ENCODE measurements at regions of chr14 and their contacts with region 1.

Region 1: DNA sequence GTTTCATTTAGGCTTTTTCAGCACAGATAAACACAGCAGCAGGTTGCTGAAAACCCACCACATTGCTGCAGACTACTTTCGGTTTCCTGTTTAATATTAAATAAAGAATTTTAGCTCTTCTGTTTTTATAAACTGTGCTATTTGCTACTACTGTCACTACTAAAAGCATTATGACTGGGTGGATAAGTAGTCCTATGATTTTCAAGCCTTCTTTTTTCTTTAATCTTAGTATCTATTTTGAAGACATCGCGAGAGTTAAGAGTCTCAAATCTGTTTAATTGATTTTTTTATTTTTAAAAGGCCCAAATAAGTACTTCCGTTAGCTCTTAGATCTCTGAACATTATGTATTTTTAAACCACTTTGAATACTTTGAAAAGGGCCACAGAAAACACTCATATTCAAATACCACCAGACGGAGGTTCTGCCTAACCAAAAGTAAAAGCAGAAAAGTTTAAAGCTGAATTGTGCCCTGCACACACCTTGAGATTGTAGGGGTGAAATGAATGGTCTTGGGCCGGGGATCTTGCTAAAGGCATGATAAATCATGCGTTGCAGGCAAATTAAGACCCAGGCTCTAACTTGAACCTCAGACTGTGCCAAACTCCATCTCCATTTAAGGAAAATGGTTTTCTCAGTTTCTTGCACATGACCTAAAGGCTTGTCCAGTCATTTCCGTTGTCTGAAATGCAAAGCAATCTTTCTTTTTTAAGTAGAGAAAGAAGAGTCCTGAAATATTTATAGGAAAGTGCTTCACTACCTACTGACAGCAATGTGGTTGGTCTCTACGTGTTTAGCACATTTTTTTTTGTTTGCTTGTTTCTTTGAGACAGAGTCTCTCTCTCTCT is 13.6 kb upstream of the FOXN3 start:
- DNase-seq: peak; percentile 61
- ATAC-seq: peak; percentile 74
- H3K4me3 Mint-ChIP-seq: peak overlapping the region; percentile 70
- H3K27ac Mint-ChIP-seq: peak overlapping the region; percentile 95
- H3K4me1 Mint-ChIP-seq: peaks cover 75% of the 10 kb centered on the region
- H3K27me3 Mint-ChIP-seq: no peaks in the 10 kb centered on the region

Region 2: DNA sequence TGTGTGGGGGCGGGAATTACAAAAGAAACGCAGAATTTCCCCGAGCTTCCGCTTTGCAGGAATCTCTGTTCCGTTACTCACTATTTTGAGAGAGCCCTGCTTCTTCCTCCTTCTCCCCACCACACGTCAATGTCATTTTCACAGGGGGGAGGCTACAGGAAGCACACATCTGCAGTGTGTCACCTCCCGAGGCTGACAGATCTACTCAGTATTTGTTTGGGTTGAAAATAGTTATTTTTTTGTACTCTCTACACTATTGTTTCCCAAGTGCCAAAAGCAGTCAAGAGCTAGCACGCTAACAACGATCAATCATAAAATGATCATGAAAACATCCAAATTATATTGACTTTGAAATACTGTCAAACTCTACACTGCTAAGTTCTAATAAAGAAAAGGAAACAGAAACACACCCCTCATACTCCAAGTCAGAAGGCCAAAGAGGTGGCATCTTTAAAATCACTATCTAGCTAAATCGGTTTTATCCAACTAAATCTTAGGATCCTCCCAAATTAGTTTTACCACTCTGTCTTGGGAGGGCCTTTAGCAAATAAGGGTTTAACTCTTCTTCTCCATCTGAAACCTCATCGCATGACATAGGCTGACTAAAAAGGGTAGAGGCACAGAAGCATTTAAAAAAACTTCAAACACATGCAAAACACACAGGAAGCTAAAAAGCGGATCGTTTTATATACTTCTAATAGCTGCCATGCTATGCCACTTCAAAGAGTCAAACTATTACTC is 65.4 kb before region 1 on chr14:
- CTCF ChIA-PET with region 1: interaction called, 7 read pairs
- POLR2A ChIA-PET with region 1: interaction called, 11 read pairs
- DNase-seq: peak; percentile 75
- ATAC-seq: peak; percentile 90
- H3K4me3 Mint-ChIP-seq: peak overlapping the region; percentile 74
- H3K27ac Mint-ChIP-seq: peak overlapping the region; percentile 82
- H3K4me1 Mint-ChIP-seq: peaks cover 48% of the 10 kb centered on the region
- H3K27me3 Mint-ChIP-seq: no peaks in the 10 kb centered on the region

Region 3: GRCh38 chr14:89417469-89418225 is 13.0 kb before region 1 on chr14:
- CTCF ChIA-PET with region 1: interaction called, 3 read pairs
- POLR2A ChIA-PET with region 1: interaction called, 11 read pairs
- DNase-seq: peak; percentile 78
- ATAC-seq: peak; percentile 62
- H3K4me3 Mint-ChIP-seq: peak overlapping the region; percentile 86
- H3K27ac Mint-ChIP-seq: peak overlapping the region; percentile 95
- H3K4me1 Mint-ChIP-seq: peaks cover 55% of the 10 kb centered on the region
- H3K27me3 Mint-ChIP-seq: no peaks in the 10 kb centered on the region

Region 4: DNA sequence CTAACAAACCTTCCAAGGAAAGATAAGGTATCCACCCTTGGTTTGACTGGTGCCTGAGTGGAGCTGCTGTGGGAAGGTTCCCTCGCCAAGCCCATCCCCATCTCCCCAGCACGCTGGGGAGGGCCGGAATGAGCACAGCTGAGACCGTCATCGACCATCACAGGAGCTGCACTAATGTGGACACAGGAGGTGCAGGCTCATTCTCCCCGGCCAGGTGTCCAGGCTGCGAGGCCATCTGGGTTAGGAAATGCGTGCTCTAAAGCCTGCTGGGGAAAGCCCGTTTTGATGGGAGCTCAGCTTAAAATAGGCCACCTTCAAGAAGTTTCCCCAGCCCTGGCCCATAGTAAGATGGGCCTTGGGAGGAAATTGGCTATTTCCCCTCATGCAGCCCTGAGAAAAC is 21.7 kb after region 1 on chr14:
- CTCF ChIA-PET with region 1: no interaction called
- POLR2A ChIA-PET with region 1: no interaction called
- DNase-seq: no peak
- ATAC-seq: no peak
- H3K4me3 Mint-ChIP-seq: no peak overlapping the region
- H3K27ac Mint-ChIP-seq: no peak overlapping the region
- H3K4me1 Mint-ChIP-seq: peaks cover 15% of the 10 kb centered on the region
- H3K27me3 Mint-ChIP-seq: no peaks in the 10 kb centered on the region

Measured in activated CD8-positive, alpha-beta T cell treated with anti-CD3 and anti-CD28 coated beads, Interleukin-2, amount 10 ng/mL, durations not matched to agents 7 days and 5 days (primary cell).